Dendritic cell treated with granulocyte-macrophage colony-stimulating factor and Interleukin-4, amounts not matched to agents 40 ng/mL and 50 ng/mL, for 4 days (primary cell): ENCODE measurements at regions of chr6 and their contacts with region 1.

Region 1: GRCh38 chr6:166402582-166403277 is 20.0 kb upstream of the MPC1 start:
- H3K4me3 Mint-ChIP-seq: no peak overlapping the region
- H3K27ac Mint-ChIP-seq: peak overlapping the region; percentile 9
- H3K4me1 Mint-ChIP-seq: no peaks in the 10 kb centered on the region
- H3K27me3 Mint-ChIP-seq: peaks cover 4% of the 10 kb centered on the region

Region 2: DNA sequence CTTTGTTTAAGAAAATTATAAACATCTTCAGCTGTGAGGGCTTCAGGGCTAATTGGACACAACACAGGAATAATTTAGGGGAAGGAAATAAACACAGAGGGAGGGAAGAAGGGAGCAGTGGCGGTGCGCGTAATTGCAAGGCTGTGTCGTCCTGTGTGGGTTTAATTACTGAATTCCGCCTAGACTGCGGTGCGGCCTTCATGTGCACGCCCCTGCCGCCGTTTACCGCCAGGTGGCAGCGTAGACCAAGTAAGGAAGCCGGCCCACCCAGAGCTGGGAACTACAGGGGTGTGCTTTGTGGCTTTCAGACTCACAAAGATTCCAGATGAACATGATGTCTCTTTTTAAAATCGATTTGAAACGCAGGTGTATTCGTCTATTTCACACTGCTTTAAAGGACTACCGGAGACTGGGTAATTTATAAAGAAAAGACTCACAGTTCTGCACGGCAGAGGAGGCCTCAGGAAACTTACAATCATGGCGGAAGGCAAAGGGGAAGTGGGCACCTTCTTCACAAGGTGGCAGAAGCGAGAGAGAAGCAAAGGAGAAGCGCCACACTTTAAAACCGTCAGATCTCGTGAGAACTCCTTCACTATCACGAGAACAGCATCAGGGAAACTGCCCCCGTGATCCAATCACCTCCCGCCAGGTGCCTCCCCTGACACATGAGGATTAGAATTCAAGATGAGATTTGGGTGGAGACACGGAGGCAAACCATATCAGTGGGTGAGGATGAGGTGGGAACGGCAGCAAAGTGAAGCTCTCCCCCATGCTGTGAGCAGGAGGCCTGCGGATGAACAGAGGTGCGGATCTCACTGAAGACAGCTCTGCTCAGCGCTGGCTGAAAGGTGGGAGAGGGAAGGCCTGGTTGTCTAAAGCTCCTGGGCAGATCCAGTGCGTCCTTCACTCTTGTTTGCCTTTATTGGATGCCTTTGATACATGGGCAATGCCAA is 517.6 kb before region 1 on chr6:
- intact Hi-C with region 1: loop called (anchors 5 kb)
- H3K4me3 Mint-ChIP-seq: no peak overlapping the region
- H3K27ac Mint-ChIP-seq: no peak overlapping the region
- H3K4me1 Mint-ChIP-seq: peaks cover 6% of the 10 kb centered on the region
- H3K27me3 Mint-ChIP-seq: peaks cover 4% of the 10 kb centered on the region

Region 3: GRCh38 chr6:166156942-166157341 is 245.8 kb before region 1 on chr6:
- intact Hi-C with region 1: loop called (anchors 2 kb)
- H3K4me3 Mint-ChIP-seq: no peak overlapping the region
- H3K27ac Mint-ChIP-seq: no peak overlapping the region
- H3K4me1 Mint-ChIP-seq: no peaks in the 10 kb centered on the region
- H3K27me3 Mint-ChIP-seq: peaks cover 5% of the 10 kb centered on the region

Region 4: GRCh38 chr6:166275714-166276166 is 127.0 kb before region 1 on chr6:
- intact Hi-C with region 1: loop called (anchors 1 kb)
- H3K4me3 Mint-ChIP-seq: no peak overlapping the region
- H3K27ac Mint-ChIP-seq: peak overlapping the region; percentile 71
- H3K4me1 Mint-ChIP-seq: peaks cover 5% of the 10 kb centered on the region
- H3K27me3 Mint-ChIP-seq: peaks cover 5% of the 10 kb centered on the region

Region 5: GRCh38 chr6:166313255-166314070 is 89.3 kb before region 1 on chr6:
- intact Hi-C with region 1: loop called (anchors 1 kb)
- H3K4me3 Mint-ChIP-seq: no peak overlapping the region
- H3K27ac Mint-ChIP-seq: no peak overlapping the region
- H3K4me1 Mint-ChIP-seq: no peaks in the 10 kb centered on the region
- H3K27me3 Mint-ChIP-seq: peaks cover 29% of the 10 kb centered on the region

Region 6: DNA sequence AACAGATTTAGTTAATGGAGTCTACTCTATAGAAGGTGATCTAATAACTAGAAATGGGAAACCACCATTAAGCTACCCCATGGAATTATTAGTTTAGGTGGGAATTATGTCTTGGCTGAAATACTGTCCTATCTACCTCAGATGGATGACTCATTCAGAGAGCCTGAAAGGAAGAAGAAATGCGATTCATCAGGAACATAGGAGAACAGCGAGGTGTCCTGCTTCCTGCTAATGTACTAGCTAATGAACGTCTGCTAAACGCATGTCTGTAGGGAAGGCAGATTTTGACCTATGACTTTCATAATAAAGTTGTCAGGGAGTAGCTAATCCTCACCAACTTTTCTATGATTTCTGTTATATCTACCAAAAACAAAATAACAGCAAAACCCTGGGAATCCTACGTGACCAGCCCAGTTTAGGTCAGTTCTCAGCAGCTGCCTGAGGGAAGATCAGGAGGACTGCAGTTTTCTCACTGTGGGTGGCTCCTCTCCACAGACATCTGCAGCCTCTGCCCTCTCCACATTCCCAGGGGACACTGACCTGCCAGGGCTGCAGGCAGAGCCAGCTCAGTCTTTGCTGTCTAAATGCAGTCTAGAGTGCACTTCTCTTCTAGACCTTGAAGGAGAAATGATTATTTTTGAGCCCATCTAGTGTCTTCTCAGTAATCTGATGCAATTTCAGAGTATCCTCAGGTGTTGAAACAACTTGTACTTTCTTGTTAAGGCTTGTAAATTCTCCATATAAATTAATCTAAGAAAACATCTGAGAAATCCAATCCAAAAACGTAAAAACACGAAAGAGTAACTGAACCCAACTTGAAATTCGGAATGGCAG is 42.3 kb before region 1 on chr6:
- intact Hi-C with region 1: no loop called
- H3K4me3 Mint-ChIP-seq: no peak overlapping the region
- H3K27ac Mint-ChIP-seq: no peak overlapping the region
- H3K4me1 Mint-ChIP-seq: peaks cover 19% of the 10 kb centered on the region
- H3K27me3 Mint-ChIP-seq: no peaks in the 10 kb centered on the region

Region 7: GRCh38 chr6:166499350-166500163 is 96.8 kb after region 1 on chr6:
- intact Hi-C with region 1: no loop called
- H3K4me3 Mint-ChIP-seq: no peak overlapping the region
- H3K27ac Mint-ChIP-seq: no peak overlapping the region
- H3K4me1 Mint-ChIP-seq: no peaks in the 10 kb centered on the region
- H3K27me3 Mint-ChIP-seq: no peaks in the 10 kb centered on the region